ENCODE measurements at regions of chr1 and their contacts with region 1.

Region 1: DNA sequence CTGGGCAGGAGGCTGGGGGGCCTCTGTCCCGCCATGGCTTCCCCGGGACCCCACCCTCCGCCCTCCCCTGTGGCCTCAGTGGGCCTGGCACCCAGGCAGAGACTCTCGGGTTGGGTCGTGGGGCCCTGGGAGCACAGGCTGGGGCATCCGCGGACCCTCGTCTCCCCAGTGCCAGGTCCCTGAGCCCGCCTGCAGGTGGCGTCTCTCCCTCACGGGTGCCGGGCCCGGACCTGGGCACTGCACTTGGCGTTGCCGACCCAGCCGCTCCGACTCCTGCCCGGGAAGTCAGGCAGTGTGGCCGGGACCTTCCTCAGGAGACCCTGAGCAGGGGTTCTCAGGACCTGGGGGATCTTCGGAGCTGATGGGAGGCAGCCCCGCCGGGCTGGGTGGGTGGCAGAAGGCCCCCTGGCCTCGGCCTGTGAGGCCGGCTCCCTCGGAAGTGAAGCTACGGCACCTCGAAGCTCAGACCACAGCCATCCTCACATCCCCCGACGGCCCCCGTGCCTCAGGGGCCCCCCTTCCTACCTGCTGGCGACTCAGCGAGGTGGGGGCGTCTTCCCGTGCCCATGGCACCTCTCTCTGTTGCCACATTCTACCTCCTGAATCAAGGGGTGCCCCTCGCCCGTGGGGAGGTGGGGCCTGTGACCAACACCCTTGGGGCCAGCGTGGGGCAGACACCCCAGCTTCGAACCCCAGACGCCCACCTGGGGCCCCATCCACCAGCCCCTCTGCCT is 6.4 kb upstream of the C1orf159 start:
- DNase-seq: peak; percentile 83
- H3K4me3 ChIP-seq: peak overlapping the region; percentile 19
- H3K27ac ChIP-seq: no peak overlapping the region
- H3K4me1 ChIP-seq: peaks cover 15% of the 10 kb centered on the region
- H3K27me3 ChIP-seq: no peaks in the 10 kb centered on the region
- CTCF ChIP-seq: peak; percentile 94

Region 2: DNA sequence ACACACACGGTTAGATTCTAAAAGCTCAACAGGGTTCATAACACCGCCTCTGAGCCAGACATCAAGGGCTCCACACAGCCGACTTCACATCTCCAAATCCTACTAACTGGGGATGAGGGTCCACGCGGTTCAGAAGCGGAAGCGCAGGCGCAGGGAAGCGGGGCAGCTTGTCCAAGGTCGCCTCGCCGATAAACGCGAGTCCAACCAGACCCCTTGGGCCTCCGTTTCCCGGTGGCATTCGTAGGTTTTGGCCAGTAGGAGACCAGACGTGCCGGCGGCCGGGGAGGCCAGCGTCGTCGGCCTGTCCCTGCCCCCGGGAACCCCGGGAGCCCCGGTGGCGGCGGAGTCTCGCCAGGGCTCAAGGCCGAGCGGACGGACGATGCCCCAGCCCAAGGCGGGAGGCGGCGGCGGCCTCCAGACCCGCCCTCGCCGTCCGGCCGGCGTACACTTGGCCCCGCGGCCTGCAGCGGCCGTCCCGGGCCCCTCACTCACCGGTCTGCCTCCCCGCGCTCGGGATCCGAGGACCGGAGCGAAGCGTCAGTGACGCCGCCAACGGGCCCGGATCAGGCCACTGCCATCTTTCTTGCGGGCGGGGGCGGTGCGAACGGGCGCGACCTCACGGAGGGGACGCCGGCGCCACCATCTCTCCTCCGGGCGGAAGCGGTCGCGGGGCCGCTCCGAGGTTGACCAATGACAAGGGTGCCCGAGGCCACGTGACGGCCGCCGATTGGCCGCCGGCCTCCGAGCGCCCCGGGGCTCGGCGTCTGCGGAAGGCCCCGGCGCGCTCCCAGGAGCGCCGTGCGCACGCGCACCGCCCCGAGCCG is 109.4 kb after region 1 on chr1 and contains the start of gene SDF4:
- CTCF ChIA-PET with region 1: interaction called, 7 read pairs
- POLR2A ChIA-PET with region 1: no interaction called
- intact Hi-C with region 1: loop called (anchors 5 kb)
- DNase-seq: peak; percentile 99
- H3K4me3 ChIP-seq: peak within 1 kb of the TSS; percentile 97
- H3K27ac ChIP-seq: peak within 1 kb of the TSS; percentile 97
- H3K4me1 ChIP-seq: peaks cover 24% of the 10 kb centered on the region
- H3K27me3 ChIP-seq: no peaks in the 10 kb centered on the region
- CTCF ChIP-seq: no peak
- total RNA-seq, gene SDF4: 121 and 133 TPM in 2 replicates

Region 3: DNA sequence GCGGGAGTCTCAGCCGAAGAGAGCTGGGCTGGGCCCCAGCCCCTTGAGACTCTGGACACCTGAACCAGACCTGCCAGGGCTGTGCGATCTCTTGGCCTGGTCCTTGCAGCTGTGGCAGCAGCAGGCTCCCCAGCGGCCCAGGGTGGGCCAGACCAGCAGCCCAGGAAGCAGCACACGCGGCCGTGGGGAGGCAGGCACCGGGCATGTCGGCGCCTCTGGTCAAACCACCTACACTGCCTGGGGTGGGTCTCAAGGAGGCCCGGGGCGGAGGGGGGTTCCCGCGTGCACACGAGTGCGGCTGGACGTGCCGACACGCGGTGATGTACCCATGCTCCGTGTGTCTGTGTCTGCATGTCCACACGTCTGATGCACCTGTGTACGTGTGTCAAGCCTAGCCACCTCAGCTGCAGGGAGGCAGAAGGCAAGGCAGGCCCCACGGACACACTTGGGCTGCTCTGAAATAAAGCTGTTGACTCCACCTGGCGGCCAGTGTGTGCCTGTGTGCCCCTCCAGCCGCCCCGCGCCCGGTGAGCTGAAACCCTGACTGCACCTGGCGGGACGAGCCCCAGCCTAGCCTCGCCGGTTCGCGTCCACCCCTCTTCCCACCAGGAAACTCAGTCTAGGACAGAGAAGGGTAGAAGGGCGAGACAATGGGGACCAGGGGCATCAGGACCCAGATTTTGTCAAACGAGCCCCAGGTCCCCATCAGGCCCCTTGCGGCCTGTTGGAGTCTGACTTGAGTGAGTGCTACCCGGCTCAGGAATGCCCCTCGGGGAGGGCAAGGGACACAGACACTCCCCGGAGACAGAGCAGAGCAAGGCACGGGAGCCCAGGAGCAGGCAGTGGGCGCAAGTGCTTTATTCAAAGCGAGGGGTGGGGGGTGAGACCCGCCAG is 169.6 kb after region 1 on chr1:
- CTCF ChIA-PET with region 1: interaction called, 17 read pairs
- POLR2A ChIA-PET with region 1: no interaction called
- intact Hi-C with region 1: loop called (anchors 2 kb)
- DNase-seq: peak; percentile 65
- H3K4me3 ChIP-seq: no peak overlapping the region
- H3K27ac ChIP-seq: no peak overlapping the region
- H3K4me1 ChIP-seq: no peaks in the 10 kb centered on the region
- H3K27me3 ChIP-seq: no peaks in the 10 kb centered on the region
- CTCF ChIP-seq: peak; percentile 63

Region 4: DNA sequence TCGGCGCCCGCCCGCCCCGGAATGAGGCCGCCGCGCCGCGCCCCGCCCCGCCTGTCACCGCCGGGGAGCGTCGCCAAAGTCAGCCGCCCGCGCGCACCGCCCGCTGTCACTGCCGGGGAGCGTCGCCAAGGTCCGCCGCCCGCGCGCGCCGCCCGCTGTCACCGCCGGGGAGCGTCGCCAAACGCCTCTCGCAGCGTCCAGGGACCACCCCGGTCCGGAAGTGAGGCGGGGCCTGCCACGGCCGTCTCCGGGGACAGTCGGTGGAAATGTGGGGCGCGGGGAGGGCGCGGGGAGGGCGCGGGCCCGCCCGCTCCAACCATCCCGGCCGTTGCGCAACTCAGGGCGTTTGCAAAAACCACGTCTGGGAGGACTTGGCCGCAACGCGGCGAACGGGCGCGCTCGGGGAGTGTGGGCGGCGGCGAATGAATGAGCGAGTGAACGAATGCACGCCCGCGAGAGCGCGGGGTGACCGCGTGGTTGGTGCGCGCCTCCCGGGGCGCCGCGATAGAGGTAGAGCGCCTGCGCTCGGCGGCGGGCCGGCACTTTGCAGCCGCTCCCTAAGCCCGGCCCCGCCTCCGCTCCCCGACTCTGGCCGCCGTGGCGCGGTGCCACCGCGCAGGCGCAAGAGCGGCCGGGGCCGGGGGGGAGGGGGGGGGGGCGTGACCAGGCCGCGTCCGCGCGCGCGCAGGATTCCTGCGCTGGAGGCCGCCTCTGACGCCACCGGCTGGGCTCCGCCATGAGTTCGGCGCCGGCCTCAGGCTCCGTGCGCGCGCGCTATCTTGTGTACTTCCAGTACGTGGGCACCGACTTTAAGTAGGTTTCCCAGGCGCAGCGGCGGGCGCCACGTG is 185.9 kb after region 1 on chr1 and contains the starts of genes ACAP3 and PUSL1:
- CTCF ChIA-PET with region 1: interaction called, 5 read pairs
- POLR2A ChIA-PET with region 1: interaction called, 5 read pairs
- intact Hi-C with region 1: loop called (anchors 5 kb)
- DNase-seq: peak; percentile 96
- H3K4me3 ChIP-seq: peak within 1 kb of the TSS; percentile 88
- H3K27ac ChIP-seq: peak within 1 kb of the TSS; percentile 96
- H3K4me1 ChIP-seq: peaks cover 39% of the 10 kb centered on the region
- H3K27me3 ChIP-seq: no peaks in the 10 kb centered on the region
- CTCF ChIP-seq: no peak
- total RNA-seq, gene ACAP3: 67.6 and 71.9 TPM in 2 replicates
- total RNA-seq, gene PUSL1: 28.5 and 31.3 TPM in 2 replicates